Activated naive CD4-positive, alpha-beta T cell treated with anti-CD3 and anti-CD28 coated beads for 36 hours (primary cell): ENCODE measurements at regions of chr17 and their contacts with region 1.

Region 1: DNA sequence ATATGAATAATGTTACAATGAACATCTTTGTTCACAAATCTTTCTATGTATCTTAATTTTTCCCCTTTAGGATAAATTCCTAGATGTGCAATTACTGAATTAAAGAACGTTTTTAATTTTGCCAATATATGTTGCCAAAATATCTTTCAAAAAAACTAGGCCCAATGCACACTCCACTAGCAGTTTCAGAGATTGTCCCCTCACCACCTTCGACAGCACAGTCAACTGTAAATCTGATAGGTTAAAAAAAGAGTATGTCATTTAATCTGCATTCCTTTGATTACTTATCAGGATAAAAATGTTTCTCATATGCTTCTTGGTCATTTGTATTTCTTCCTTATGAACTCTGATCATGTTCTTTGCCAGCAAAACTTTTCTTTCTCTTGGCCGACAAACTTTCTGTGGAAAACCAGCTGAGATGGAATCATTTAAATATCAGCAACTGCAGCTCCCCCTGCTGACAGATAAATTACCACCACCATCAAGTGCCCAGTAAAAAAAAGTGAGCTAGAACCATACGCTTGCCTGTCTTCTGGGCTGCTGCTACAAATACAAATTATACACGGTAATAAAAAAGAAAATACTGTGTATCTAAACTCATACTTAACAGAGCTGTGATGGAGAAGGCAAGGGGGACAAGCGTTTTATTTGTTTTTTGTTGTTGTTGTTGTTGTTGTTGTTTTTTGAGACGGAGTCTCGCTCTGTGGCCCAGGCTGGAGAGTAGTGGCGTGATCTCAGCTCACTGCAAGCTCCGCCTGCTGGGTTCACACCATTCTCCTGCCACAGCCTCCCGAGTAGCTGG is 19.6 kb upstream of the KANSL1 start:
- DNase-seq: peak; percentile 78
- H3K4me3 Mint-ChIP-seq: no peak overlapping the region
- H3K27ac Mint-ChIP-seq: peak overlapping the region; percentile 20
- H3K4me1 Mint-ChIP-seq: peaks cover 34% of the 10 kb centered on the region
- H3K27me3 Mint-ChIP-seq: no peaks in the 10 kb centered on the region

Region 2: GRCh38 chr17:45628019-45628418 is 584.8 kb before region 1 on chr17:
- CTCF ChIA-PET with region 1: no interaction called
- intact Hi-C with region 1: loop called (anchors 10 kb)
- DNase-seq: no peak
- H3K4me3 Mint-ChIP-seq: no peak overlapping the region
- H3K27ac Mint-ChIP-seq: no peak overlapping the region
- H3K4me1 Mint-ChIP-seq: no peaks in the 10 kb centered on the region
- H3K27me3 Mint-ChIP-seq: no peaks in the 10 kb centered on the region

Region 3: DNA sequence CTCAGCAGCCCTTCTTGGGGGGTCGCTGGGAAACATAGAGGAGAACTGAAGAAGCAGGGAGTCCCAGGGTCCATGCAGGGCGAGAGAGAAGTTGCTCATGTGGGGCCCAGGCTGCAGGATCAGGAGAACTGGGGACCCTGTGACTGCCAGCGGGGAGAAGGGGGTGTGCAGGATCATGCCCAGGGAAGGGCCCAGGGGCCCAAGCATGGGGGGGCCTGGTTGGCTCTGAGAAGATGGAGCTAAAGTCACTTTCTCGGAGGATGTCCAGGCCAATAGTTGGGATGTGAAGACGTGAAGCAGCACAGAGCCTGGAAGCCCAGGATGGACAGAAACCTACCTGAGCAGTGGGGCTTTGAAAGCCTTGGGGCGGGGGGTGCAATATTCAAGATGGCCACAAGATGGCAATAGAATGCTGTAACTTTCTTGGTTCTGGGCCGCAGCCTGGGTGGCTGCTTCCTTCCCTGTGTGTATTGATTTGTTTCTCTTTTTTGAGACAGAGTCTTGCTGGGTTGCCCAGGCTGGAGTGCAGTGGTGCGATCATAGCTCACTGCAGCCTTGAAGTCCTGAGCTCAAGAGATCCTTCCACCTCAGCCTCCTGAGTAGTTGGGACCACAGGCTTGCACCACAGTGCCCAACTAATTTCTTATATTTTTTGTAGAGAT is 210.4 kb before region 1 on chr17:
- CTCF ChIA-PET with region 1: interaction called, 13 read pairs
- intact Hi-C with region 1: loop called (anchors 1 kb)
- DNase-seq: peak; percentile 82
- H3K4me3 Mint-ChIP-seq: no peak overlapping the region
- H3K27ac Mint-ChIP-seq: no peak overlapping the region
- H3K4me1 Mint-ChIP-seq: no peaks in the 10 kb centered on the region
- H3K27me3 Mint-ChIP-seq: no peaks in the 10 kb centered on the region

Region 4: GRCh38 chr17:46044286-46044928 is 168.4 kb before region 1 on chr17:
- CTCF ChIA-PET with region 1: interaction called, 16 read pairs
- intact Hi-C with region 1: loop called (anchors 1 kb)
- DNase-seq: peak; percentile 82
- H3K4me3 Mint-ChIP-seq: no peak overlapping the region
- H3K27ac Mint-ChIP-seq: no peak overlapping the region
- H3K4me1 Mint-ChIP-seq: peaks cover 11% of the 10 kb centered on the region
- H3K27me3 Mint-ChIP-seq: no peaks in the 10 kb centered on the region

Region 5: GRCh38 chr17:46154151-46154816 is 58.6 kb before region 1 on chr17:
- CTCF ChIA-PET with region 1: interaction called, 14 read pairs
- intact Hi-C with region 1: no loop called
- DNase-seq: peak; percentile 61
- H3K4me3 Mint-ChIP-seq: peak overlapping the region; percentile 38
- H3K27ac Mint-ChIP-seq: peak overlapping the region; percentile 59
- H3K4me1 Mint-ChIP-seq: peaks cover 89% of the 10 kb centered on the region
- H3K27me3 Mint-ChIP-seq: no peaks in the 10 kb centered on the region

Region 6: DNA sequence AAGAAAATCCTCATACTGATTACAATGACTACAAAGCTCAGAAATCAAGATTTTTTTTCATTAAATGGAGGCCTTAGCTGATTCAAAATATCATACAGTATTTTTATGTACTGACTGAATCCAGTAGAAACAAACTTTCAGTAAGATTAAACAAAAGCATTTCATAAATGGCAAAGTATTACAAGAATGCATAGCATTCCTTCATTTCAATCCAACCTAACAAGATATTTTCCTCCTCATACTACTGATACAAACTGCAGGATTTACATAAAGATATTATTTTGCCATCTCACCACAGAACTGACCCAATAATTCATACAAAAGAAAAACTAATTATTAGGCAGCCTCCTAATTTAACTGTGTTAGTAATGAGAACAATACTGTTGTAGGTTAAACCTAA is 13.5 kb before region 1 on chr17:
- CTCF ChIA-PET with region 1: interaction called, 58 read pairs
- intact Hi-C with region 1: loop called (anchors 1 kb)
- DNase-seq: no peak
- H3K4me3 Mint-ChIP-seq: no peak overlapping the region
- H3K27ac Mint-ChIP-seq: no peak overlapping the region
- H3K4me1 Mint-ChIP-seq: peaks cover 72% of the 10 kb centered on the region
- H3K27me3 Mint-ChIP-seq: no peaks in the 10 kb centered on the region

Region 7: DNA sequence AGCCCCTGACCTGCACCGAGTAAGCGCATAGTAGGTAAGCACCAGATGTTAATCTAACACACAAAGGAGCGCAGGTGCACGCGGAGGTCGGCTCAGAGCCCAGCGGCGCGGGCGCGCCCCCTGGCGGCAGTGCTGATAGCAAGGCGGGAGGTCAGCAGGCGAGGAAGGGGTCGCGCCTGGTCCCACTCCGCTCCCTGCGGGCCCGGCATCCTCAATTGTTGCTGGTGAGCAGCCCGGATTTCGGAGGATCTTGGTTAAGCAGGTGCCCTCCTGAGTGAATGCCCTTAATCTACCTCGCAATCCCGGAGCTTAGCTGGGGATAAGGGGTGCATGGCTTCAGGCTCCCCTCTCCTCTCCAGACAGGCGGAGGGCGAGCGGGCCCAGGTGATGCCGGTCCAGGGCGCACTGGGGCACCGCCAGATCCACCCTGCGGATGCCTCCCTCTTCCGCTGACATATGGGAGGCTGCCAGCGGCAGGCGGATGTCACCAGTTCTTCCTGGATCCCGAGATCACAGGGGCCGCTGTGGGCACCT is 609.6 kb after region 1 on chr17:
- CTCF ChIA-PET with region 1: no interaction called
- intact Hi-C with region 1: loop called (anchors 10 kb)
- DNase-seq: peak; percentile 59
- H3K4me3 Mint-ChIP-seq: no peak overlapping the region
- H3K27ac Mint-ChIP-seq: no peak overlapping the region
- H3K4me1 Mint-ChIP-seq: peaks cover 13% of the 10 kb centered on the region
- H3K27me3 Mint-ChIP-seq: peaks cover 43% of the 10 kb centered on the region